ENCODE measurements at regions of chr11 and their contacts with region 1.

Region 1: DNA sequence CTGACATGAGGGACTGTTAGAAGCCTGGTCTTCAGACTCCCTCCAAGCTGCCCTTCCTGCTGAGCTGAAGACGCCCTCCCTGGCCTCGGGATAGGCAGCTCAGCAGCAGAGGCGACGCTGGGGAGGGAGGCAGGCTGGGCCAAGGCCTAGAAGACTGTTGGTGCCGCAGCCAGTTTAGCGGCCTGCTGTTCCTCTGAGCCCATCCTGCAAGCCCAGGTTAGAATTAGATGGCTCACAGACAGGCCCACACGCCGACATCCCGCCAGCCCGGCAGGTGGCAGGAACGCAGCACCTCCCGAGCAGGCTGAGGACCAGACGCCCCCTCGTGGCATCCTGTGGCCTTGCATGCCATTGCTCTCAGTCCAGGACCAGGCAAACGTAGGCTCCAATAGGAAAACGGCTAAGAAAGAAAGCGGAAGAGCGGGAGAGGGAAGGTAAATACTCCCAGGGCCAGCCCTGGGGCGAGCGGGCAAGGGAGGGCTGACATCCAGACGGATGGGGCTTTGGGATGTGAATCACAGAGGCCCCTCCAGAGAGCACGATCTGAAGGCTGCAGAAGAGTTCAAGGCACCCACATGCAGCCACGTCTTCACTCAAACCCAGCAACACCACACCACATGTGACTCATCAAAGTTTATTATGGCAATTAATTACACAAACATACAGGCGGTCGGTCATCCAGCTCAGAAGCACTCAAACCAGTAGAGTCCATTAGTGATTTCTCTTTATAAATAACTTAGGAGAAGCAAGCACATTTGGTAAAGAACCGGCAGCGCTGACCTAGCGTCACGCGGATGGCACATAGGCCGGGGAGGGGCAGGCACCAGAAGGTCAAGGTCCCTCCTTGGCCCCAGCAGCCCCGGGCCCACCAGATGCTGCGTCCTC is 27.6 kb downstream of the CD5 start:
- DNase-seq: peak; percentile 80
- H3K4me3 ChIP-seq: peak overlapping the region in 1 of 3 experiments; percentile 6
- H3K27ac ChIP-seq: peak overlapping the region; percentile 9
- H3K4me1 ChIP-seq: peaks cover 11% of the 10 kb centered on the region
- H3K27me3 ChIP-seq: no peaks in the 10 kb centered on the region
- CTCF ChIP-seq: peak; percentile 99 to 100

Region 2: GRCh38 chr11:60831143-60831500 is 298.8 kb before region 1 on chr11:
- CTCF ChIA-PET with region 1: no interaction called
- dilution Hi-C with region 1: no loop called
- in situ Hi-C with region 1: no loop called
- intact Hi-C with region 1: loop called (anchors 1 kb)
- DNase-seq: peak; percentile 72
- H3K4me3 ChIP-seq: peak overlapping the region in 1 of 3 experiments; percentile 24
- H3K27ac ChIP-seq: no peak overlapping the region
- H3K4me1 ChIP-seq: peaks cover 23% of the 10 kb centered on the region
- H3K27me3 ChIP-seq: peaks cover 4% of the 10 kb centered on the region
- CTCF ChIP-seq: peak; percentile 95 to 97

Region 3: DNA sequence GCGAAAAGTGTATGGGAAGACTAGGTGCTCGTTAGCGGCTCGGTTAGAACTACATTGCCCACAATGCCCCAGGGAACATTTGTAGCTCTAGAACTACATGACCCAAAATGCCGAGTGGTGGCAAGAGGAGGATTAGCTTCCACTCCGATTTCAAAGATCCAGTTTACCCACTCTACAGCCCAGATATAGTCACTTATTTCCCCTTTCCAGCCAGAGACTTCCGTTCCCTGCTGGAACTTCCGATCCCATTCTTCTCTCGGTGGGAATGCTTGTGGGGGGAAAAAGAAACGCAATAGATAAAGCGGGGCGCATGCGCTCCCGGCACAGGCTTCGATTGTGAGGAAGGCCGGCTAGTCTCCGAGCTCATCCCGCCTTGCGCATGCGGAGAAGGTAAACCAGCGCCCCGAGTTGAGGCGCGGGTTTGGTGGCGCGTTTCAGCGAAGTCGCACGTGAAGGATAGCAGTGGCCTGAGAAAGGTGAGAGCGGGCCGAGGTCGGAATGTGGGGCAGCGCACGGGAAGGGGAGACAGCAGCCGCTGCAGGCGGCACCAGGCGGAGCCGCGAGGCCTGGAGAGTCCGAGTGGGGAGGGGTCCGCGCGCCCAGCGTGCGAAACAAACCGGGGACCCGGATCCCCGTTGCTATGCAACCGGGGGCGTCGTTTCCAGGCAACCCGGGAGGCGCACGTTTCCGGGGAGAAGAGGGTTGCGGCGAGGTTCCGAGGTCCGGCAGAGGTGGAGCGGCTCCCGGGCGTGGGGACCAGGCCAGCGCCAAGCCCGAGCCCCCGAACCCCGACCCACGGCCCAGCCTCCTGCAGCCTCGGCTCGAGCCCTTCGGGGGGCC is 215.9 kb before region 1 on chr11 and contains the start of gene TMEM109:
- CTCF ChIA-PET with region 1: interaction called, 3 read pairs
- dilution Hi-C with region 1: no loop called
- in situ Hi-C with region 1: no loop called
- intact Hi-C with region 1: loop called (anchors 5 kb)
- DNase-seq: peak; percentile 84
- H3K4me3 ChIP-seq: peak within 1 kb of the TSS; percentile 58 to 81 (median 77)
- H3K27ac ChIP-seq: peak within 1 kb of the TSS; percentile 71
- H3K4me1 ChIP-seq: peaks cover 44% of the 10 kb centered on the region
- H3K27me3 ChIP-seq: no peaks in the 10 kb centered on the region
- CTCF ChIP-seq: no peak
- total RNA-seq, gene TMEM109: 19.8 to 44.9 TPM

Region 4: GRCh38 chr11:61028272-61028761 is 101.6 kb before region 1 on chr11:
- CTCF ChIA-PET with region 1: no interaction called
- dilution Hi-C with region 1: loop called (anchors 5 kb)
- in situ Hi-C with region 1: no loop called
- intact Hi-C with region 1: no loop called
- DNase-seq: no peak
- H3K4me3 ChIP-seq: no peak overlapping the region
- H3K27ac ChIP-seq: no peak overlapping the region
- H3K4me1 ChIP-seq: no peaks in the 10 kb centered on the region
- H3K27me3 ChIP-seq: no peaks in the 10 kb centered on the region
- CTCF ChIP-seq: no peak

Region 5: GRCh38 chr11:61161190-61162091 is 31.6 kb after region 1 on chr11 and contains the start of gene VPS37C:
- CTCF ChIA-PET with region 1: no interaction called
- dilution Hi-C with region 1: no loop called
- in situ Hi-C with region 1: no loop called
- intact Hi-C with region 1: loop called (anchors 1 kb)
- DNase-seq: peak; percentile 87
- H3K4me3 ChIP-seq: peak within 1 kb of the TSS; percentile 57 to 82 (median 65)
- H3K27ac ChIP-seq: peak within 1 kb of the TSS; percentile 80
- H3K4me1 ChIP-seq: peaks cover 32% of the 10 kb centered on the region
- H3K27me3 ChIP-seq: no peaks in the 10 kb centered on the region
- CTCF ChIP-seq: no peak
- total RNA-seq, gene VPS37C: 10.7 to 17.1 TPM